Lower leg skin (tissue), 4 donors: ENCODE measurements at regions of chr17 and their contacts with region 1.

Region 1: DNA sequence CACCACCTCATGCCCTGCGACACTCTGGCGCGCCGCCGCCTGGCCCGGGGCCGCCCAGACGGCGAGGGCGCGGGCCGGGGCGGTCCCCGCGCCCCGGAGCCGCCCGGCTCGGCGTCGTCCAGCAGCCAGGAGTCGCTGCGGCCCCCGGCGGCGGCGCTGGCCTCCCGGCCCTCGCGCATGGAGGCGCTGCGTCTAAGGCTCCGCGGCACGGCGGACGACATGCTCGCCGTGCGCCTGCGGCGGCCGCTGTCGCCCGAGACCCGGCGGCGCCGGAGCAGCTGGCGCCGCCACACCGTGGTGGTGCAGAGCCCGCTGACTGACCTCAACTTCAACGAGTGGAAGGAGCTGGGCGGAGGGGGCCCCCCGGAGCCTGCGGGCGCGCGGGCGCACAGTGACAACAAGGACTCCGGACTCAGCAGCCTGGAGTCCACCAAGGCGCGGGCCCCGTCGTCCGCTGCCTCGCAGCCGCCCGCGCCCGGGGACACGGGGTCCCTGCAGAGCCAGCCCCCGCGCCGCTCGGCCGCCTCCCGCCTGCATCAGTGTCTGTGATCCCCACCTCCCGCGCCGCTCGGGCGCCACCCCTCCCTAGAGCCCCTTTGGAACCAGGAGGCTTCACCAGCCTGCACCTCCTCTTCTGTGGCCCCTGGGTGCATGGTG is 82.3 kb downstream of the ARHGAP23 start:
- DNase-seq: no peak
- H3K4me3 ChIP-seq: no peak overlapping the region
- CTCF ChIP-seq: no peak
- POLR2A ChIP-seq: no peak

Region 2: GRCh38 chr17:38557836-38558727 is 47.5 kb after region 1 on chr17:
- intact Hi-C with region 1: no loop called
- DNase-seq: peak; percentile 89 to 98
- H3K4me3 ChIP-seq: peak overlapping the region; percentile 25
- CTCF ChIP-seq: peak in 1 of 3 donors; percentile 86
- POLR2A ChIP-seq: no peak

Region 3: GRCh38 chr17:38667099-38667786 is 156.7 kb after region 1 on chr17:
- intact Hi-C with region 1: loop called (anchors 10 kb)
- DNase-seq: peak; percentile 43 to 89
- H3K4me3 ChIP-seq: no peak overlapping the region
- CTCF ChIP-seq: peak in 1 of 3 donors; percentile 86
- POLR2A ChIP-seq: no peak